ENCODE measurements at regions of chr10 and their contacts with region 1.

Region 1: DNA sequence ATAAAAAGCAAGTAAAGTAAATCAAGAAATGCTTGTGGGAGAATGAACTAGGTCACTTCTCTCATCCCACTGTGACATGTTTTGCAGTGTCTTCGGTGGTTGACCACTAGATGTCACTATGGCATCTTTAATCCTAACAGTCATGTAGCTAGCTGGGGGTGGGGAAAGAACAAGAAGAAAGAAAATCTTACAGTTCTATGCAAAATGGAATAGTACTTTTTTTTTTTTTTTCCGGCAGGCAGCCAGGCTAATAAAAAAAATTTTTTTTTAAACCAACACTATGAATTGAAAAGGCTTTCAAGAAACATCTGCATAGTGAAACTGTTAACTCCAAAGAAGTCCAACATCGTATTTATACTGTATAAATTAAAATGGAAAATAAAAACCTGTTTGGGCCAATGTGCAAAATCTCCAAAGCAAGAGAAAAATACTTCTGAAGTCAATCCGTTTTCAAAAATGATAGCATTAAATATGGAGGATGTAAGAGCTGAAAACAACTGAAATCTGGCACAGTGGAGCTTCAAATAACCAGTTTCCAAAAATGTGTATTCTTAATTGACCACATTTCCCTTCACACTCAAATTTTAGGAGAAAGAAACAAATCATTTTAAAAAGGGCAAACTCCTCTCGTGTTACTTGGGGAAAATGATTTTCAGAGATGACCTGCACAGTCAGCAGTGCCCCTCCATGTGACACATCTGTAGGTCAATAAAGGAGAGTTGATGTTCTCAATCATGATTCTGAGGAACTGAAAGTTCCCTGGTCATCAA is 38.5 kb downstream of the CDK1 start:
- DNase-seq: peak; percentile 65
- H3K4me3 ChIP-seq: no peak overlapping the region
- H3K27ac ChIP-seq: peak overlapping the region; percentile 37
- H3K4me1 ChIP-seq: no peaks in the 10 kb centered on the region
- H3K27me3 ChIP-seq: no peaks in the 10 kb centered on the region
- CTCF ChIP-seq: peak; percentile 61

Region 2: GRCh38 chr10:60964257-60965235 is 147.7 kb after region 1 on chr10:
- intact Hi-C with region 1: loop called (anchors 5 kb)
- DNase-seq: peak; percentile 75
- H3K4me3 ChIP-seq: no peak overlapping the region
- H3K27ac ChIP-seq: peak overlapping the region; percentile 10
- H3K4me1 ChIP-seq: no peaks in the 10 kb centered on the region
- H3K27me3 ChIP-seq: no peaks in the 10 kb centered on the region
- CTCF ChIP-seq: peak; percentile 78

Region 3: DNA sequence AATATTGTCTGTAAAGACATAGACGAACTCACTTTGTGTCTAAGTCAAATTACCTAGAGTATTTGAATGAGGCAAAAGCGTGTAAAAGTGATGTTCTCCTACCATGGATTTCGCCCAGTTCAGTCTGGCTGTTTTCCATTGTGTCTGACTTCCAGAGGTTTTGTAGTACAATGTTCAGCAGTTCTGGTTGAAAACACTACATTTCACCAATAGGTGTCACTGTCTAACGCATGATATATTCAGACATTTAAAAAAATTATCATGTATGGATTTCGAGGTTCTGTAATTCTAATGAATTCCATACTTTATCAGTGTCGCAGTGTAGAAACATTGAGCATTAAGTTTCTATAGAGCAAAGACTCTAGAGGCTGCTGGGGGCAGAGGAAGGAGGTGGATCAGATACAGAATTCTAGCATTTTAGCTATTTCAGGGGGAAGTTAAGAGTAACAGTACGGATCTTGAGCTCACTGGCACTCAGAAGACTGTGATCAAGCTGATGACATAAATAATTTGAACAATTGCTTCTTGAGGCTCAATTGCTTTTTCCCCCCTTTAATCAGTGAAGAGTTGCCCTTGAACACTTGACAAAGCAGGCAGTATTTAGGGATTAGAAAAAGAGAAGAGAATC is 324.1 kb after region 1 on chr10:
- intact Hi-C with region 1: loop called (anchors 10 kb)
- DNase-seq: no peak
- H3K4me3 ChIP-seq: no peak overlapping the region
- H3K27ac ChIP-seq: no peak overlapping the region
- H3K4me1 ChIP-seq: no peaks in the 10 kb centered on the region
- H3K27me3 ChIP-seq: no peaks in the 10 kb centered on the region
- CTCF ChIP-seq: peak; percentile 47

Region 4: GRCh38 chr10:61284222-61284890 is 467.5 kb after region 1 on chr10:
- intact Hi-C with region 1: loop called (anchors 5 kb)
- DNase-seq: no peak
- H3K4me3 ChIP-seq: no peak overlapping the region
- H3K27ac ChIP-seq: no peak overlapping the region
- H3K4me1 ChIP-seq: no peaks in the 10 kb centered on the region
- H3K27me3 ChIP-seq: no peaks in the 10 kb centered on the region
- CTCF ChIP-seq: peak; percentile 63

Region 5: DNA sequence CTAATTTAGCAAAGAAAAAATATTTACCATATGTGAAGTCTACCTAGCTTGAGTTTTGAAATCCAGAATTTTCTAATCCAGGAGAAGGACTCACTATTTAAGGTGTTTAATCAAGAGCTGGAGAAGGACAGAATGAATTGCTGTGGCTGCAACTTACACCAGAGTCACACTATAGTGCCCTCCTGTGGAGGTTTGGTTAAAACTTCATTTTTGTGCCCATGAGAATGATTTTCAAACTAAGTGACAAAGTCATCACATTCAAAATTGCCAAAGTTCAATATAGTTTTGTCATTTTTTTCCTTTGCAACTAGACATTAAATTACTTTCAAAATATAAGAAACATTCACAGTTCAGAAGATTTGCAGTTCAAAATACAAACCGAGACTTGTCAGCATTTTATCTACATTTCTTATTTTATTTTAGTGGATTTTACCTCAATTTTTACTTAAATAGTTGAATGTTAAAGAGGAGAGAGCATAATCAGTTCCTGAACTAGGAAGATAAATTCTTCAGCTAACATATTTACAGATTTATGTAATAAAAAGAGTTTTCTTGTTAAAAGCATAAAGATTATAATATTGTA is 916.6 kb after region 1 on chr10:
- intact Hi-C with region 1: loop called (anchors 10 kb)
- DNase-seq: no peak
- H3K4me3 ChIP-seq: no peak overlapping the region
- H3K27ac ChIP-seq: no peak overlapping the region
- H3K4me1 ChIP-seq: no peaks in the 10 kb centered on the region
- H3K27me3 ChIP-seq: no peaks in the 10 kb centered on the region
- CTCF ChIP-seq: peak; percentile 44